AG04450 (cell line): ENCODE measurements at regions of chr2 and their contacts with region 1.

Region 1: GRCh38 chr2:42328148-42328833 is 32.7 kb downstream of the COX7A2L start:
- DNase-seq: no peak
- H3K4me3 ChIP-seq: no peak overlapping the region
- H3K27ac ChIP-seq: no peak overlapping the region
- H3K27me3 ChIP-seq: no peaks in the 10 kb centered on the region
- CTCF ChIP-seq: peak; percentile 54

Region 2: GRCh38 chr2:42317486-42317885 is 10.8 kb before region 1 on chr2:
- CTCF ChIA-PET with region 1: interaction called, 11 read pairs
- POLR2A ChIA-PET with region 1: interaction called, 3 read pairs
- DNase-seq: no peak
- H3K4me3 ChIP-seq: no peak overlapping the region
- H3K27ac ChIP-seq: no peak overlapping the region
- H3K27me3 ChIP-seq: no peaks in the 10 kb centered on the region
- CTCF ChIP-seq: no peak

Region 3: DNA sequence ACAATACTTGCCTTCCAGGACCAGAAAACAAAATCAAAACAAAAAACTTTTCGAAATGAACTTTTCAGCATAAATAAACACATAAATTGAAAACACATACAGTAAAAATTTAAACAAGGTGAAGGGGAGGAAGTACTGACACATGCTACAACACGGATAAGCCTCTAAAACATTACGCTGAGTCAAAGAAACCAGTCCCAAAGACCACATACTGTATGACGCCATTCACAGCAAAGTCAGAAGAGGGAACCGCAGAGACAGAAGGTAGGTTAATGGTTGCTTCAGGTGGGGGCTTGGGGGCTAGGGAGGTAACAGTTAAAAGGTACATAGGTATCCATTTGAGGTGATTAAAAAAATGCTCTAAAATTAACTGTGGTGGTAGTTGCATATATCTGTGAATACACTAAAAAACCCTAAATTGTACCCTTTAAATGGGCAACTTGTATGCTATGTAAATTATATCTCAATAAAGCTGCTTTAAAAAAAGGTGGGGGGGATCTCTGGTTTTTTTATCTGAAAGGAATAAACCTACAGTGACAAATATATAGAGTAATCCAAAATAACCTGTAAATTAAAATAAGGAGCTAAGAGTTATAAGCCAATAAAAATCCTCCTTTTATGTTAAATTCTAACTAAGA is 25.6 kb after region 1 on chr2:
- CTCF ChIA-PET with region 1: interaction called, 13 read pairs
- POLR2A ChIA-PET with region 1: no interaction called
- DNase-seq: no peak
- H3K4me3 ChIP-seq: no peak overlapping the region
- H3K27ac ChIP-seq: no peak overlapping the region
- H3K27me3 ChIP-seq: no peaks in the 10 kb centered on the region
- CTCF ChIP-seq: no peak